Esophagus muscularis mucosa (tissue), 4 donors: ENCODE measurements at regions of chr19 and their contacts with region 1.

Region 1: GRCh38 chr19:57279418-57280066 is 743 bp upstream of the ZNF460 start:
- DNase-seq: peak; percentile 97
- H3K4me3 ChIP-seq: peak overlapping the region; percentile 74 to 92 (median 90)
- H3K27ac ChIP-seq: peak overlapping the region; percentile 97 to 100 (median 98)
- H3K4me1 ChIP-seq: peaks cover 33 to 51% (median 45%) of the 10 kb centered on the region in 4 donors
- H3K27me3 ChIP-seq: no peaks in the 10 kb centered on the region
- CTCF ChIP-seq: peak in 2 of 3 experiments; percentile 26 to 34
- EP300 ChIP-seq: peak; percentile 96
- POLR2A ChIP-seq: no peak

Region 2: DNA sequence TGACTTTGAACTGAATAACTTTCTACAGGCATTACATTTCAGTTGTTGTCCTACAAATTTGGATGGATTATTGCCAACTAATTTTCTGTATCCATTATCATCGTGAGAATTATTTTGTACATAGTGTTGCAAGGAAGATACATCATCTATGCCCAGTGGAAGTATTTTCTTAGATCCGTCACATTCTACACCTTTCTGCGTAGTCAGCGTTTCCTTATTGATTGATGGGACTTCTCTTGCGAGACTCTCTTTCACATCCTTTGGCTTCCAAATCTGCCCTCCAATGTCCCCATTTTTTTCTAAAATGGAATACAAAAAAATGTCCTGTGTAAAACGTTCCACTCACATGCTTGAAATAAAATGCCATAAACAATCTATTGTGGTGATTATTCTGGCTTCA is 143.7 kb before region 1 on chr19:
- intact Hi-C with region 1: no loop called
- DNase-seq: no peak
- H3K4me3 ChIP-seq: no peak overlapping the region
- H3K27ac ChIP-seq: no peak overlapping the region
- H3K4me1 ChIP-seq: no peaks in the 10 kb centered on the region
- H3K27me3 ChIP-seq: peaks cover 0 to 30% (median 0%) of the 10 kb centered on the region in 4 donors
- CTCF ChIP-seq: no peak
- EP300 ChIP-seq: no peak
- POLR2A ChIP-seq: no peak

Region 3: DNA sequence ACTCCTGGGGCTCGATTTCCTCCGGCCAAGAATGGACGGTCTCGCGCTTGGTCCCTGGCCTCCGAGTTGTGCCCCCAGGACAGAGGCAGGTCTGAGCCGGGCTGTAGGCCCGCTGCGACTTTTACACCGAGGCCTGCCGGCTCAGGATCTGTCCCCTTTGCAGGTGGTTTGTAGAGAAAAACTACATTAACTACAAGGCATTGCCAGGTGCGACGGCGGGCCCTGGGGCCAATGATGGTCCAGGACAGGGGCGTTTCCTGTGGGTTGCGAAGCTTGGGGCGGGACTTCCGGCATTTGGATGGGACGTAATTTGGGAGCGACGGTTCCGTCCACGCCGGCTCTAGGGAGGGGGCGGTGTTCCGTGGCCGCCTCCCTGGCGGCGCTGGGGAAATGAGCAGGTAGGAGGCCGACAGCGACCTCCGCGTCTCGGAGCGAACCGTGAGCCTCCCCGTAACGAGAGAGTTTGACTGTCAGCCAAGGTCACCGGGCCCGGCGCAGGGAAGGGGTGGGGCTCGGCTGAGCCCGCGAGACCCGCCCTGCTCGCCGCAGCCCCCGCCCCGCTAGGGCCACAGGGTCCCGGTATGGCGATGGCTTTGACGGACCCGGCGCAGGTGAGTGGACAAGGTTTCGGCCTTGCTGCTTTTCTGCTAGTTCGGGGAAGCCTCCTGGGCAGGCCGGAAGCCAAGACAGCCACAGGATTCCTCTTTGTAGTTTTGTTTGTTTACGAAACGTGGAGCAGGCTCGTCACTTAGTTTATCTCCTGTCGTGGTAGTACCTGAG is 39.0 kb before region 1 on chr19 and contains the start of gene ZNF805:
- intact Hi-C with region 1: loop called (anchors 5 kb)
- DNase-seq: peak; percentile 98
- H3K4me3 ChIP-seq: peak within 1 kb of the TSS; percentile 79 to 94 (median 88)
- H3K27ac ChIP-seq: peak within 1 kb of the TSS; percentile 88 to 92 (median 90)
- H3K4me1 ChIP-seq: peaks cover 21 to 36% (median 29%) of the 10 kb centered on the region in 4 donors
- H3K27me3 ChIP-seq: no peaks in the 10 kb centered on the region
- CTCF ChIP-seq: peak in 1 of 3 experiments; percentile 20
- EP300 ChIP-seq: no peak
- POLR2A ChIP-seq: peak; percentile 36
- total RNA-seq, gene ZNF805: 13.3 to 19.7 (median 17.3) TPM

Region 4: DNA sequence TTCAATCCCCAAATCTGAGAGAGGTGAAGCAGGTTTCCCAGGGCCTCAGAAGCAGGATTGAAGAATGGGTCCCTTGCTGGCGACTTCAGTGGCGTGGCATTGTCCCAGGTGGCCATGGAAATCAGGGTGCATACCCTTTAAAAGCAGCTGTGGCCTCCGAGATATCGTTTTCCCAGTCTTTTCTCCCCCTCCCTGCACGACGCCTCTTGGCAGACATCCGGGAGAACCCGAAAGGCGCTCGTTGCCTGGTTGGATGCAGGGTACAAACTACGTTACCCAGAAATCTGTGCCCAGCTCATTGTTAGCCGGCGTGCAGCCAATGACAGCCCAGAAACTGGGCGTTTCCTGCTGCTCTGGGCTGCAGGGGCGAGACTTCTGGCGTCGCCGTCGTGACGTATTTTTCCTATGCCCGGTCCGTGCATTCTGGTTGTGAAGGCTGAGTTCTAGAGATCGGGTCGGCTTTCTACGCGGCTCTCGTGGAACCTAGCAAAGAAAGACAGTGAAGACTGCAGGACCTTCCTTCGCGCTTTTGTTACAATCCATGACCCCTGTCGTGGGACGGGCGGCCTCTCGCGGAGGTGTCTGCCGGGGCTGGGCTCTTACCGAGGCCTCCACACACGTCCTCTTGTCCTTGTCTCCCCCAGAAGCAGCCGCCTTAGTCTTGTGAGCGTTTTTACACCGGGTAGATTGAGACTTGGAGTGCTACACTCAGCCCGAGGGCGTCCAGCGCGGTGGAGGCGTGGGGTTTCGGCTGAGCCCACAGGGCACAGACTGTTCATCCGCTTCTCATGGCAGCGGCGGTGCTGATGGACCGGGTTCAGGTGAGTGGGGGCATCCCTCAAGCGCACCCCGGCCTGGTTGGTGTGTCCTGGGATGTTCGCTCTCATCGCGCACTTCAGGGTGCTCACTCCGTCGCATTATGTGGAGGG is 71.6 kb after region 1 on chr19 and contains the start of gene ZNF304:
- intact Hi-C with region 1: loop called (anchors 10 kb)
- DNase-seq: peak; percentile 97
- H3K4me3 ChIP-seq: peak within 1 kb of the TSS; percentile 84 to 96 (median 91)
- H3K27ac ChIP-seq: peak within 1 kb of the TSS; percentile 83 to 89 (median 86)
- H3K4me1 ChIP-seq: peaks cover 11 to 29% (median 27%) of the 10 kb centered on the region in 4 donors
- H3K27me3 ChIP-seq: no peaks in the 10 kb centered on the region
- CTCF ChIP-seq: no peak
- EP300 ChIP-seq: no peak
- POLR2A ChIP-seq: no peak
- total RNA-seq, gene ZNF304: 7.1 to 12.4 (median 8.5) TPM